Right lobe of liver (tissue), 6 donors: ENCODE measurements at regions of chr9 and their contacts with region 1.

Region 1: DNA sequence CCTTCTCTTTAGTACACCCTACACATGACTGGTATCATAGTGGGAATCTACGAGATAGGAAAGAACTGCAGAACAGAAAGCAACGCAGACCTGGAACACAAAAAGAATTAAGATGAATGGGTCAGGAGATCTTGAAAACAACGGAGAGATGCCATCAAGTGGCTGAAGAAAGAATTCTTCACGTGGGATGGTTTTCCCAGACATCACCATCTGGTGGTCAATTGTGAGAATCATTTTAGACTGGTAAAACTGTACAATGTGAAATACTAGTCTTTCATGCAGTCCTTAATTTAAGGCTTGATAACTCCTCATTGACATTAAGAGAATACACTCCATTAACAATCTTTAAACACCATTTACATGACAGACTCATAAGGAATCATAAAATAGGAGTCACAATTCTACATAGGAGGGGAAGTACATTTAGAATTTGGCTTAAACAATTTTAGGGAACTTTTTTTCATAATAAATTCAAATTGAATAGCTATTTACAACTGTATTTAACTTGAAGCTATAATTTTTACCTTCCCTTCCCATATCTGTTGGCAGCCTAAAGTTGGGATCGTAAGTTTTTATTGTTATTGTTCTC is 128.4 kb upstream of the TRPM3 start:
- DNase-seq: no peak
- ATAC-seq: peak; percentile 94 to 98 (median 97)
- H3K4me3 ChIP-seq: no peak overlapping the region
- H3K27ac ChIP-seq: no peak overlapping the region
- H3K4me1 ChIP-seq: peaks cover 0 to 25% (median 3%) of the 10 kb centered on the region in 4 donors
- H3K27me3 ChIP-seq: no peaks in the 10 kb centered on the region
- CTCF ChIP-seq: peak; percentile 82 to 95 (median 84)
- POLR2A ChIP-seq: no peak

Region 2: DNA sequence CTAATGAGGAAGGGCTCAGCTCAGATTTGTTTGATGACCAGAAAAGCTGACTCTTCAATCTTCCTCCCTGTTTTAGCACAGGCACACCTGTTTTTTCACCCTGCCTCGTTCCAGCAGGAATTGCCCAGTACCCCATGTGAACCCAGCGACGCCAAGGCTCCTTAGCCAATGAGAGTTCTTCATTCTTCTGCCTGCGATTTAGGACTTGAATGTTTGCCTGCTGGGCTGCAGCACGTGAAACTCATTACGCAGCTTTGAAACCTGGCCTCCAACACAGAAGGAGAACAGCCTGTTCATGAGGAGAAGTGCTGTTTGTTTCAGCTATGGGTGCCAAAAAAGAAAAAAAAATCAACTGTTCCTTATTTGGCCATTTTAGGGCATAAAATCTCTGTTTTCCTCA is 443.9 kb before region 1 on chr9:
- intact Hi-C with region 1: no loop called
- DNase-seq: no peak
- ATAC-seq: no peak
- H3K4me3 ChIP-seq: no peak overlapping the region
- H3K27ac ChIP-seq: no peak overlapping the region
- H3K4me1 ChIP-seq: no peaks in the 10 kb centered on the region
- H3K27me3 ChIP-seq: no peaks in the 10 kb centered on the region
- CTCF ChIP-seq: no peak
- POLR2A ChIP-seq: no peak

Region 3: GRCh38 chr9:70924895-70925547 is 324.8 kb before region 1 on chr9:
- intact Hi-C with region 1: loop called in 1 of 2 experiments (anchors 5 kb)
- DNase-seq: peak in 1 of 3 donors; percentile 50
- ATAC-seq: peak; percentile 99
- H3K4me3 ChIP-seq: no peak overlapping the region
- H3K27ac ChIP-seq: no peak overlapping the region
- H3K4me1 ChIP-seq: no peaks in the 10 kb centered on the region
- H3K27me3 ChIP-seq: no peaks in the 10 kb centered on the region
- CTCF ChIP-seq: peak; percentile 81 to 94 (median 88)
- POLR2A ChIP-seq: no peak

Region 4: GRCh38 chr9:71302776-71303175 is 53.0 kb after region 1 on chr9:
- intact Hi-C with region 1: no loop called
- DNase-seq: no peak
- ATAC-seq: no peak
- H3K4me3 ChIP-seq: no peak overlapping the region
- H3K27ac ChIP-seq: no peak overlapping the region
- H3K4me1 ChIP-seq: no peaks in the 10 kb centered on the region
- H3K27me3 ChIP-seq: no peaks in the 10 kb centered on the region
- CTCF ChIP-seq: no peak
- POLR2A ChIP-seq: no peak